Cardiac septum (tissue), 1 donor: ENCODE measurements at regions of chr2 and their contacts with region 1.

Region 1: GRCh38 chr2:36544638-36545338 is 53.2 kb downstream of the FEZ2 start:
- DNase-seq: no peak

Region 2: DNA sequence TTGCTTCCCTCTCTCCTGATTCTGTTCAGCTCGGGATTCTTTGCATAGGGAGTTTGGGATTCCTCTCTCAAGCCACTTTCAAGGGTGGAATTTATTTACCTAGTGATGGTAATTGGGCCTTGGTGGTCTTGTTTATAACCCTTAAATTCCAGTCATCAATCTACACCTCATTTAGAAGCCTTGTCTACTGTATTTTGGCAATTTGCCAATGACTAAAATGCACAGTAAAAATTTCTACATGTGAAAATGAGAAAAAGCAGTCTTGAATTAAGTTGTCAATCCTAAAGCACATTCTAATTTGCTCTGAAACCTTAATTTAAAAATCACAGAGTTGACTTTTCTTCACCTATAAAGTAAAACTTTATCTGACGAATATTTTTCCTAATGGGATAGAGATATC is 938.4 kb before region 1 on chr2:
- intact Hi-C with region 1: no loop called
- DNase-seq: no peak

Region 3: GRCh38 chr2:36173760-36174404 is 370.9 kb before region 1 on chr2:
- intact Hi-C with region 1: no loop called
- DNase-seq: no peak

Region 4: GRCh38 chr2:36427790-36428243 is 117.0 kb before region 1 on chr2:
- intact Hi-C with region 1: no loop called
- DNase-seq: no peak

Region 5: DNA sequence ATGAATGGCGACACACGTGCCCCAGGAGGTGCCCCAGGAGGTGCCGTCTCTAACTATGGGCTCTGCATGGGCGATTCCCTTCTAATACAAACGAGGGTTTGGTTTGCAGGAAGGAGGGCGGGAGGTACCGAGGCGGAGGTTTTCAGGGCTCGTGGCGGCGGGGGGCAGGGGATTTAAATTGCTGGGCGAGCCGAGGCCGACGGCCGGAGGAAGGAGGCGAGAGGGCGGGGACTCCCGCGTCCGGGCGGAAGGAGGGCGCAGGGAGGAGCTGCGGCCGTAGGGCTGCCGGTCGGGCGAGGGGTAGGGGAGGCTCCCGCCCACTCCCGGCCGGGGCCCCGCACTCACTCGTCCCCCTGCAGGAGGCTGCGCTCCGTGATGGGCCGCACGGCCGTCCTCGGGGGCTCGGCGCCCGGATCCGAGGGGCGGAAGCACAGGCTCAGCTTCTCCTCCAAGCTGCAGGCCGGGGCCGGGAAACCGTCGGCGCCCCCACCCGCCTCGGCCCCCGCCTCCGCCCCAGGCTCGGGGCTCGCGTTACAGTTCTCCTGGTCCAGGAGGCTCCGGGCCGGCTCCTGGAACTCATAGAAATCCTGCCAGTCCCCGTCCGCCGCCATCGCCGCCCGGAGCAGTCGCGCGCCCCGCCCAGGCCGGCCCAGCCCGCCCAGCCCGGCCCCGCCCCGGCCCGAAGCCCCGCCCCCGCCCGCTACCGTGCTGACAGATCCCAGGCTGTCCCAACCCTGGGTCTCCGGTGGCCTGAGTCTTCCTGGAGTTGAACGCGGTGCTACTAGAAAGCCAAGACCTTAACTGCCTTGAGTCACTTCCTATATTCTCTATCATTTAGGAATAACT is 53.0 kb after region 1 on chr2 and contains the start of gene FEZ2:
- intact Hi-C with region 1: loop called (anchors 5 kb)
- DNase-seq: peak; percentile 90
- total RNA-seq, gene FEZ2: 50.5 TPM